ENCODE measurements at regions of chr1 and their contacts with region 1.

Region 1: DNA sequence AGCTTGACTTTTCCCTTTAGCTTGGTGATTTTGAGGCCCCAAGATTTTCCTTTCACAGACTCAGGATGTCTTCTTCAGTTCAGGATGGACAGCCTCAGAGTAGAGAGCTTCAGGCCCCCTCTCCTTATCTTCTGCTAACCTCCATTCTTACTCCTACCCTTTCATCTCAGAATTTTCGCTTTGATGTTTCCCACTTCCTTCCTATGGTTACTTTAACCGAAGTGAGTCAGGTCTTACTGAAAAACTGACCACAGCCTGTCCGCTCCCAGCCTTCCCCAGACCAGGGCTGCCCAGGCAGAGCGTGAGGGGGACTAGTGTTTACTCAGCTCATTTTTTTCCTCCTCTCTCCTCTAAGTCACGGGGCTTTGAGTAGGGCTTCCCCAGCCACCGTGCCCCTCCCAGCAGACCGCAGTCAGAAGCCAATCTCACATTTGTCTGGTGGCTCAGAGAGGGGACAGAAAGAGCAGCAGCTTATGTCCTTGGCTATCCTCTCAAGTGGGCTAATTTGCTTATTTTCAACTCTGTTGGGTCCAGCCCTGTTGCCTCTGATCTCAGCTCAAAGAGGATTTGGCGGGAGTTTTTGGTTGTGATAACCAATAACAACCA is 4.2 kb upstream of the IL19 start:
- DNase-seq: peak; percentile 88 to 97 (median 95)
- H3K4me3 ChIP-seq: peak overlapping the region in 1 of 3 experiments; percentile 22
- H3K4me3 Mint-ChIP-seq: peak overlapping the region; percentile 34 to 67
- H3K27ac ChIP-seq: peak overlapping the region in 1 of 2 donors; percentile 25
- H3K27ac Mint-ChIP-seq: peak overlapping the region; percentile 39 to 91 (median 81)
- H3K4me1 ChIP-seq: peaks cover 45 to 57% of the 10 kb centered on the region in 2 donors
- H3K4me1 Mint-ChIP-seq: peaks cover 54% of the 10 kb centered on the region
- H3K27me3 ChIP-seq: no peaks in the 10 kb centered on the region
- H3K27me3 Mint-ChIP-seq: peaks cover under 1 to 21% (median 10%) of the 10 kb centered on the region in 3 donors
- CTCF ChIP-seq: no peak

Region 2: GRCh38 chr1:206734499-206735142 is 31.7 kb before region 1 on chr1:
- intact Hi-C with region 1: loop called (anchors 5 kb)
- DNase-seq: peak; percentile 45 to 59 (median 55)
- H3K4me3 ChIP-seq: peak overlapping the region in 1 of 3 experiments; percentile 18
- H3K4me3 Mint-ChIP-seq: no peak overlapping the region
- H3K27ac ChIP-seq: peak overlapping the region in 1 of 2 donors; percentile 49
- H3K27ac Mint-ChIP-seq: peak overlapping the region; percentile 14 to 81 (median 31)
- H3K4me1 ChIP-seq: peaks cover 38 to 47% of the 10 kb centered on the region in 2 donors
- H3K4me1 Mint-ChIP-seq: peaks cover 55% of the 10 kb centered on the region
- H3K27me3 ChIP-seq: no peaks in the 10 kb centered on the region
- H3K27me3 Mint-ChIP-seq: peaks cover 0 to 1% (median 0%) of the 10 kb centered on the region in 3 donors
- CTCF ChIP-seq: peak; percentile 92

Region 3: DNA sequence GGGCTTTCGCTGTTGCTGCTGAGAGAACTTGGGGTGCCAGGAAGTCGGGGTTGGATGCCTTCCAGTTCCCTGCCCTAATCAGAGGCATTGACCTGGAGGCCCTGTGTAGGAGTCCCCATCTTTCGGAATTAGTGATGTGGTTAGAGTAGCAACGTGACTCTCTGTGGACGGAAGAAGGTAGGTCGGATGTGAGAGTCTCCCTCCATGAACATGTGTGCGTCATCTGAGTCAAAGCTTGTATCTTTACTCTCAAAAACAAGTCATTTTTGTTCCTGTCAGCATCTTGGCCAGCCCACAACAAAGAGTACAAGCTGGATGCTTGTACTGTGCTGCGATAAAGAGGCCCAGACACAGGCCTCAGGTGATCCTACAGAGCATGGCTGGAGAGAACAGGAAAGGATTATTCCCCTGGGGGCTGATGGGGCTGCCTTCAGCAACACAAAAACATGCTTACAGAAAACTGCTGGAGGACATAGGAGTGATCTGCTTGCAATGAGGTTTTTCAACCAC is 36.9 kb after region 1 on chr1:
- intact Hi-C with region 1: loop called in 1 of 2 experiments (anchors 5 kb)
- DNase-seq: no peak
- H3K4me3 ChIP-seq: no peak overlapping the region
- H3K4me3 Mint-ChIP-seq: no peak overlapping the region
- H3K27ac ChIP-seq: no peak overlapping the region
- H3K27ac Mint-ChIP-seq: peak overlapping the region in 1 of 7 donors; percentile 49
- H3K4me1 ChIP-seq: peaks cover 3 to 14% of the 10 kb centered on the region in 2 donors
- H3K4me1 Mint-ChIP-seq: peaks cover 15% of the 10 kb centered on the region
- H3K27me3 ChIP-seq: no peaks in the 10 kb centered on the region
- H3K27me3 Mint-ChIP-seq: peaks cover 4 to 11% (median 7%) of the 10 kb centered on the region in 3 donors
- CTCF ChIP-seq: no peak

Region 4: DNA sequence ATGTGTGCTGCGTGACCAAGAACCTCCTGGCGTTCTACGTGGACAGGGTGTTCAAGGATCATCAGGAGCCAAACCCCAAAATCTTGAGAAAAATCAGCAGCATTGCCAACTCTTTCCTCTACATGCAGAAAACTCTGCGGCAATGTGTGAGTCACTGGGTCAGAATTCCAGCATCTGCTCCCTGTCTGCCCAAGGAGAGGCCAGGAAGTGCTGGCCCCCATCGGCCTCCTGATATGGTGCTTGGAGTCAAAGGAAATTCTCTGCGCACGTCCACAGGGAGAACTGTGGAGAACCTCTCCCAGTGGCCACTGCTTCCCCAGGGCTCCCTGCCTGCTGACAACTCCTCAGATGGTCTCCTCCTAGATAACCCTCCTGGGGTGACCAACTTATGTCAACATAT is 73.5 kb after region 1 on chr1:
- intact Hi-C with region 1: loop called in 1 of 2 experiments (anchors 10 kb)
- DNase-seq: no peak
- H3K4me3 ChIP-seq: no peak overlapping the region
- H3K4me3 Mint-ChIP-seq: no peak overlapping the region
- H3K27ac ChIP-seq: no peak overlapping the region
- H3K27ac Mint-ChIP-seq: no peak overlapping the region
- H3K4me1 ChIP-seq: peaks cover 7 to 11% of the 10 kb centered on the region in 2 donors
- H3K4me1 Mint-ChIP-seq: peaks cover 7% of the 10 kb centered on the region
- H3K27me3 ChIP-seq: no peaks in the 10 kb centered on the region
- H3K27me3 Mint-ChIP-seq: peaks cover 2 to 13% (median 2%) of the 10 kb centered on the region in 3 donors
- CTCF ChIP-seq: no peak

Region 5: GRCh38 chr1:207885129-207886032 is 1119.0 kb after region 1 on chr1:
- intact Hi-C with region 1: loop called in 1 of 2 experiments (anchors 5 kb)
- DNase-seq: peak; percentile 64 to 80 (median 79)
- H3K4me3 ChIP-seq: no peak overlapping the region
- H3K4me3 Mint-ChIP-seq: peak overlapping the region in 1 of 2 donors; percentile 13
- H3K27ac ChIP-seq: no peak overlapping the region
- H3K27ac Mint-ChIP-seq: peak overlapping the region in 1 of 7 donors; percentile 3
- H3K4me1 ChIP-seq: peaks cover 29 to 42% of the 10 kb centered on the region in 2 donors
- H3K4me1 Mint-ChIP-seq: peaks cover 53% of the 10 kb centered on the region
- H3K27me3 ChIP-seq: no peaks in the 10 kb centered on the region
- H3K27me3 Mint-ChIP-seq: peaks cover 0 to 9% (median 2%) of the 10 kb centered on the region in 3 donors
- CTCF ChIP-seq: peak; percentile 99